Naive thymus-derived CD4-positive, alpha-beta T cell (primary cell): ENCODE measurements at regions of chr12 and their contacts with region 1.

Region 1: DNA sequence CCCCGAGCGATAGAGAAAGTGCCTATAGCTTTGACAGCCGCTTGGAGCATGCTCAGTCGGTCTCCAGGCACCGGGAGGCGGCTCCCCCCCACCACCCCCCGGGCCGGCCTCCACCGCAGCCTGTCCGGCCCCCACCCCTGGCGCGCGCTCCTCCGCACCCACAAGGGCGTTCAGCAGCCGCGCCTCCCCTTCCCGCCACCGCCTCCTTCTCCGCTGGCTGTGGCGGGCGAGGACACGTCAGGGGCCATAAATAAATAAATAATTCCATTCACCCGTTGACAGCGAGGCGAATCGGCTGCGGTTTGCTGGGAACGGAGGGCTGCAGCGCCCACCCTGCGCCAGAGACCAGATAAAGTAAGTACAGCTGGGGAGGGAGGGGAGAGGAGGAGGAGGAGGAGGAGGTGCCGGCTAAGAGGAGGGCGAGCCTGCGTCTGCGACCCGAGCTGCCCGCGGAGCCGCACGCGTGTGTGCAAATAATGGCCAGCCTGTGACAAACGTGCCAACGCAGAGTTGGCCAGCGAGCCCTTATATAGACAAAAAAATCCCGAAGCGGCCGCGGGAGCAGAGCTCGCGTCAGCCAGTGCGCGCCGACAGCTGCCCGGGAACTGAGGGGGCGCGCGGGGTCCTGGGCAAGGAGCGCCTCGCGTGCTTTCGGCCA is at the start of gene SLC16A7:
- DNase-seq: peak; percentile 60 to 82 (median 76)
- ATAC-seq: peak; percentile 69
- H3K4me3 ChIP-seq: peak within 1 kb of the TSS; percentile 84
- H3K4me3 Mint-ChIP-seq: peak within 1 kb of the TSS; percentile 87 to 99 (median 95)
- H3K27ac ChIP-seq: peak within 1 kb of the TSS; percentile 89
- H3K27ac Mint-ChIP-seq: peak within 1 kb of the TSS; percentile 93 to 99 (median 97)
- H3K4me1 ChIP-seq: peaks cover 18 to 22% of the 10 kb centered on the region in 2 donors
- H3K4me1 Mint-ChIP-seq: peaks cover 28 to 69% (median 64%) of the 10 kb centered on the region in 7 donors
- H3K27me3 ChIP-seq: no peaks in the 10 kb centered on the region
- H3K27me3 Mint-ChIP-seq: no peaks in the 10 kb centered on the region
- total RNA-seq, gene SLC16A7: 32.3 to 57.5 (median 40.4) TPM

Region 2: GRCh38 chr12:59403259-59403932 is 192.6 kb before region 1 on chr12:
- CTCF ChIA-PET with region 1: no interaction called
- POLR2A ChIA-PET with region 1: no interaction called
- intact Hi-C with region 1: loop called in 1 of 2 experiments (anchors 5 kb)
- DNase-seq: peak in 7 of 9 donors; percentile 11 to 42 (median 37)
- ATAC-seq: peak; percentile 55
- H3K4me3 ChIP-seq: no peak overlapping the region
- H3K4me3 Mint-ChIP-seq: no peak overlapping the region
- H3K27ac ChIP-seq: no peak overlapping the region
- H3K27ac Mint-ChIP-seq: no peak overlapping the region
- H3K4me1 ChIP-seq: no peaks in the 10 kb centered on the region
- H3K4me1 Mint-ChIP-seq: peaks cover 0 to 12% (median 1%) of the 10 kb centered on the region in 7 donors
- H3K27me3 ChIP-seq: no peaks in the 10 kb centered on the region
- H3K27me3 Mint-ChIP-seq: peaks cover 0 to 8% (median 0%) of the 10 kb centered on the region in 5 donors

Region 3: DNA sequence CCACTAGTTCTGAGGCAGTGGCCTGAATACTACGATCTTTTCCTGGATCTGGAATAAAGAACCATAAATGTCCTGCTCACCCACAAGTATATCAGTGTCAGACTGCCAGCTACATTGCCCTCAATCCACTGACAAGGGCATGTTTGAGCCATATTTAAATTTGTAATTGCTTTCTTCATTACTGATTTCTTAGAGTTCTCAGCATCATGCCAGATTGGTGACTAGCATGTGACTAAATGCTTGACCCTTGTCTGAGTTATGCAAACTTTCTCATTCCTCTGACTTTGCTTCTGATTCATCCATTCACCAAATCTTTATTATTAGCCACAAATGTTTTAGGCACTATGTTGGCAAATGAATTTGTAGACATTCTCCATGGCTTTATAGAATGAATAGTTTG is 143.8 kb before region 1 on chr12:
- CTCF ChIA-PET with region 1: no interaction called
- POLR2A ChIA-PET with region 1: no interaction called
- intact Hi-C with region 1: loop called in 1 of 2 experiments (anchors 2 kb)
- DNase-seq: no peak
- ATAC-seq: no peak
- H3K4me3 ChIP-seq: no peak overlapping the region
- H3K4me3 Mint-ChIP-seq: no peak overlapping the region
- H3K27ac ChIP-seq: no peak overlapping the region
- H3K27ac Mint-ChIP-seq: no peak overlapping the region
- H3K4me1 ChIP-seq: no peaks in the 10 kb centered on the region
- H3K4me1 Mint-ChIP-seq: no peaks in the 10 kb centered on the region
- H3K27me3 ChIP-seq: no peaks in the 10 kb centered on the region
- H3K27me3 Mint-ChIP-seq: no peaks in the 10 kb centered on the region

Region 4: GRCh38 chr12:59559696-59560095 is 36.3 kb before region 1 on chr12:
- CTCF ChIA-PET with region 1: no interaction called
- POLR2A ChIA-PET with region 1: no interaction called
- intact Hi-C with region 1: loop called in 1 of 2 experiments (anchors 5 kb)
- DNase-seq: no peak
- ATAC-seq: no peak
- H3K4me3 ChIP-seq: no peak overlapping the region
- H3K4me3 Mint-ChIP-seq: no peak overlapping the region
- H3K27ac ChIP-seq: no peak overlapping the region
- H3K27ac Mint-ChIP-seq: no peak overlapping the region
- H3K4me1 ChIP-seq: no peaks in the 10 kb centered on the region
- H3K4me1 Mint-ChIP-seq: no peaks in the 10 kb centered on the region
- H3K27me3 ChIP-seq: no peaks in the 10 kb centered on the region
- H3K27me3 Mint-ChIP-seq: peaks cover 0 to 6% (median 0%) of the 10 kb centered on the region in 5 donors

Region 5: DNA sequence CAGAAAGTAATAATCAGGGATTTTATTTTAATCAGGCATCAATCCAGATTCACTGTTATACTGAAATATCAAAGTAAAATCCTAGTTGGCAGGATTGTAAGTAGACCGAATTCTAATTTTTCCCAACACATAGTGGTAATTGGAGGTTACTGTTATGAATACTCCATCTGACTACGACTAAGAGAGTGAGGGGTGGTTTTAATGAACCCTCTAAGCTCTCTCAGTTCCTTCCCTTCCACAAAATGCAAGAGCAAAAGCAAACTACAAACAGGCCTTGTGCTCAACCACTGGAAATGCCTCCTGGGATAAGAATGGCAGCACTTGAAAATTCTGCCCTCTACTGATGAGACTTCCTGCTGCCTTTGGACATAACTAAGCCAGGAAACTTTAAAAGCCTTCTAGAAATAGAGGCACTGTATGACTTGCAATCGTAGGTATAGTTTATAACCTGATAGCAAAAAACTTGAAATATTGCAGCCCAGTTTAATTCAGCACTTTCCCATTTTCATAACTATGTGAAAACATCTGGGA is 184.7 kb after region 1 on chr12:
- CTCF ChIA-PET with region 1: no interaction called
- POLR2A ChIA-PET with region 1: no interaction called
- intact Hi-C with region 1: loop called in 1 of 2 experiments (anchors 5 kb)
- DNase-seq: no peak
- ATAC-seq: no peak
- H3K4me3 ChIP-seq: no peak overlapping the region
- H3K4me3 Mint-ChIP-seq: no peak overlapping the region
- H3K27ac ChIP-seq: no peak overlapping the region
- H3K27ac Mint-ChIP-seq: no peak overlapping the region
- H3K4me1 ChIP-seq: no peaks in the 10 kb centered on the region
- H3K4me1 Mint-ChIP-seq: no peaks in the 10 kb centered on the region
- H3K27me3 ChIP-seq: no peaks in the 10 kb centered on the region
- H3K27me3 Mint-ChIP-seq: no peaks in the 10 kb centered on the region